CD4-positive, alpha-beta T cell (primary cell): ENCODE measurements at regions of chr10 and their contacts with region 1.

Region 1: DNA sequence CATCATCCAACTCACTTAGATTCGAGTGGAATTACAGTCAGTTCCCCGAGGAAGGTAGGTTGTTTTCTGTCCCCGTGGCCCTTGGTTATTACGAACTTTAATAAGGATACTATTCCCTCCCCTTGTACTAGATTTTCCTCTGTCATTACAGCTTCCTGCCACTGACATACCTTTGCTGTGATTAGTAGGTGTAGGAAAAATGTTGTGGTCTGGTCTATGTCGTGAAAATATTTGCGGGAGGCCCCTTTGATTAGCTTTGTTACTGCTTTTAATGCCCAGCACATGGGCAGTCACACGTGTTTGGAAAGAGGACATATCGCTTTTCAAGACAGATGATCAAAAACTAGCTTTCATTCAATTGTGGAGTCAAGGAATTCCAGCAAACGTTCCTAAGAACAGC is 92.2 kb downstream of the GATA3 start:
- DNase-seq: no peak
- ATAC-seq: no peak
- H3K4me3 ChIP-seq: no peak overlapping the region
- H3K4me3 Mint-ChIP-seq: no peak overlapping the region
- H3K27ac ChIP-seq: no peak overlapping the region
- H3K27ac Mint-ChIP-seq: no peak overlapping the region
- H3K4me1 ChIP-seq: no peaks in the 10 kb centered on the region
- H3K4me1 Mint-ChIP-seq: no peaks in the 10 kb centered on the region
- H3K27me3 ChIP-seq: no peaks in the 10 kb centered on the region
- H3K27me3 Mint-ChIP-seq: no peaks in the 10 kb centered on the region
- CTCF ChIP-seq: no peak

Region 2: DNA sequence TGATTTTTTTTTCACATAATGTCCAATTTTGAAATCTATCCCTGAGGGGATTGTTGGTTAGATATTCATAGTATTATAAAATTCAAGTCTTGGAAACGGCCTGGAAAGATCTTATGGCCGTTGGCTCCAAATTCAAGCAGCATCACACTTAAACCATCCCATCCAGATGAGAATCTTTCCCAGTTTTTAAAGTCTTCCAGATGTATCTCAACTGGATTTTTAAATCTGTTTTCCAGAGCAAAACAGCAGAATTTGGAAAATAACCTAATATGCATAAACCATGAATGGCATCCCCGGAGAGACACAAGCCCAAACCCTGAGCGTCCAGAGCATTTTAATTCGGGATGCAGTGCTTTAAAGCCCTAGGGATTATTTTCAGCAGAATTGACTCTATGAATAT is 1358.4 kb before region 1 on chr10:
- CTCF ChIA-PET with region 1: no interaction called
- POLR2A ChIA-PET with region 1: no interaction called
- intact Hi-C with region 1: no loop called
- DNase-seq: no peak
- ATAC-seq: no peak
- H3K4me3 ChIP-seq: no peak overlapping the region
- H3K4me3 Mint-ChIP-seq: no peak overlapping the region
- H3K27ac ChIP-seq: no peak overlapping the region
- H3K27ac Mint-ChIP-seq: no peak overlapping the region
- H3K4me1 ChIP-seq: no peaks in the 10 kb centered on the region
- H3K4me1 Mint-ChIP-seq: no peaks in the 10 kb centered on the region
- H3K27me3 ChIP-seq: no peaks in the 10 kb centered on the region
- H3K27me3 Mint-ChIP-seq: peaks cover 20% of the 10 kb centered on the region
- CTCF ChIP-seq: no peak

Region 3: GRCh38 chr10:8128412-8128905 is 18.2 kb before region 1 on chr10:
- CTCF ChIA-PET with region 1: no interaction called
- POLR2A ChIA-PET with region 1: no interaction called
- intact Hi-C with region 1: loop called in 1 of 2 experiments (anchors 1 kb)
- DNase-seq: no peak
- ATAC-seq: no peak
- H3K4me3 ChIP-seq: no peak overlapping the region
- H3K4me3 Mint-ChIP-seq: no peak overlapping the region
- H3K27ac ChIP-seq: no peak overlapping the region
- H3K27ac Mint-ChIP-seq: no peak overlapping the region
- H3K4me1 ChIP-seq: peaks cover 6% of the 10 kb centered on the region
- H3K4me1 Mint-ChIP-seq: peaks cover 10% of the 10 kb centered on the region
- H3K27me3 ChIP-seq: no peaks in the 10 kb centered on the region
- H3K27me3 Mint-ChIP-seq: no peaks in the 10 kb centered on the region
- CTCF ChIP-seq: no peak

Region 4: GRCh38 chr10:8738987-8739386 is 592.3 kb after region 1 on chr10:
- CTCF ChIA-PET with region 1: no interaction called
- POLR2A ChIA-PET with region 1: no interaction called
- intact Hi-C with region 1: no loop called
- DNase-seq: no peak
- ATAC-seq: no peak
- H3K4me3 ChIP-seq: no peak overlapping the region
- H3K4me3 Mint-ChIP-seq: no peak overlapping the region
- H3K27ac ChIP-seq: no peak overlapping the region
- H3K27ac Mint-ChIP-seq: no peak overlapping the region
- H3K4me1 ChIP-seq: no peaks in the 10 kb centered on the region
- H3K4me1 Mint-ChIP-seq: no peaks in the 10 kb centered on the region
- H3K27me3 ChIP-seq: no peaks in the 10 kb centered on the region
- H3K27me3 Mint-ChIP-seq: peaks cover 4% of the 10 kb centered on the region
- CTCF ChIP-seq: no peak